Ascending aorta (tissue), 2 donors: ENCODE measurements at regions of chr19 and their contacts with region 1.

Region 1: DNA sequence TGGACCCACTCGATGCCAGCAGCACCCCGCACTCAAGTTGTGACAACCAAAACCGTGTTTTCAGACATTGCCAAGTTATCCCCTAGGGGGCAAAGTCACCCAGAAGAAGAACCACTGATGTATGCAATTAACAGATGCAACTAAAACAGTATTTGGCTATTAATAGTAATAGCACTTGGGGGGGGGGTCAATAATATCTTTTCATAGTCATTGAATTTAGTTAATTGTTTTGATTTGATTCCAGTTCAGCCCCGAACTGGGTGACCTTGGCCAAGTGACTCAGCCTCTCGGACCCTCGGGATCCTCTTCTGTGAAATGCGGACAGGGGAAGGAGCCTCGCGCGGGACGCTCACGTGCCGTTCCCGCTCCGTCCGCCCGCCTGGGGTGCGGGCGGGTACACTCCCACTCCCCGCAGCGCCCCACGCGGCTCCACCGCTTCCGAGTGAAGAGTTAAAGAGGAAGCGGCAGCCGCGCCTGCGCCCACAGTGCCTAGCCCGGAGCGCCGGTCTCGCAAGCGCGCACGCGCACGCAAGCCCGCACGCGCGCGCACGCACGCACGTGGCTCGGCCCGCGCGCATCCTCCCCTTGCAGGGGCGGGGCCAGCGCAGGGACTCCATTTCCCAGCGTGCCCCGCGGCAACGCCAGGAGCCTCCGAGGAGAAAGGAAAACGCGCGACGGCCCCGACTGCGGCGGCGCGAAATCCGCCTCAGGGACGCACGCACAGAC is 449 bp upstream of the DAZAP1 start:
- DNase-seq: peak; percentile 95 to 99
- H3K4me3 ChIP-seq: peak overlapping the region; percentile 41 to 75
- H3K27ac ChIP-seq: peak overlapping the region; percentile 55 to 61
- H3K4me1 ChIP-seq: peaks cover 31 to 37% of the 10 kb centered on the region in 2 donors
- H3K27me3 ChIP-seq: no peaks in the 10 kb centered on the region
- CTCF ChIP-seq: peak in 1 of 3 experiments; percentile 17

Region 2: GRCh38 chr19:1355568-1356507 is 51.1 kb before region 1 on chr19:
- intact Hi-C with region 1: loop called (anchors 2 kb)
- DNase-seq: no peak
- H3K4me3 ChIP-seq: peak overlapping the region; percentile 85 to 98
- H3K27ac ChIP-seq: peak overlapping the region; percentile 88 to 90
- H3K4me1 ChIP-seq: peaks cover 3 to 25% of the 10 kb centered on the region in 2 donors
- H3K27me3 ChIP-seq: no peaks in the 10 kb centered on the region
- CTCF ChIP-seq: no peak